Activated CD4-positive, alpha-beta memory T cell treated with anti-CD3 and anti-CD28 coated beads for 36 hours (primary cell): ENCODE measurements at regions of chr17 and their contacts with region 1.

Region 1: DNA sequence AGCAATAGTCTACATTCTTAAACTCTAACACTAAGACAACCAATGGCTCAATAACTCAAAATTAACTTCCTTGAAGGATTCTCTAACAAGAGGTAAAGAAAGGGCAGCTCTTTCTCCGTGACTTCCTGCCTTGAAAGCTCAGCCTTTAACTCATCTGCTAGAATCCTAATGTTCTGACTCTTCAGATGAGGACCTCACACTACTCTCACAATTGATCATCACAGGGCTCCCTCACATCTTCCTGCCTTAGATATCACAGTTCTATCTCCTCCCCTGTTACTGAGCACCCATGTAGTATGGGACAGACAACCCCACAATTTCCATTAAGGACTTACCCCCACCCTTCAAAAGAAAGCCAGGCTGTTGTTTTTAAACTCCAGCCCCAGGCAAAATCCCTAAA is 33.5 kb downstream of the SMURF2 start:
- DNase-seq: peak; percentile 40
- H3K4me3 Mint-ChIP-seq: peak overlapping the region; percentile 56
- H3K27ac Mint-ChIP-seq: peak overlapping the region; percentile 75
- H3K4me1 Mint-ChIP-seq: peaks cover 55% of the 10 kb centered on the region
- H3K27me3 Mint-ChIP-seq: no peaks in the 10 kb centered on the region

Region 2: GRCh38 chr17:64437944-64438525 is 190.6 kb before region 1 on chr17:
- CTCF ChIA-PET with region 1: no interaction called
- POLR2A ChIA-PET with region 1: no interaction called
- intact Hi-C with region 1: no loop called
- DNase-seq: no peak
- H3K4me3 Mint-ChIP-seq: no peak overlapping the region
- H3K27ac Mint-ChIP-seq: no peak overlapping the region
- H3K4me1 Mint-ChIP-seq: peaks cover 19% of the 10 kb centered on the region
- H3K27me3 Mint-ChIP-seq: no peaks in the 10 kb centered on the region

Region 3: DNA sequence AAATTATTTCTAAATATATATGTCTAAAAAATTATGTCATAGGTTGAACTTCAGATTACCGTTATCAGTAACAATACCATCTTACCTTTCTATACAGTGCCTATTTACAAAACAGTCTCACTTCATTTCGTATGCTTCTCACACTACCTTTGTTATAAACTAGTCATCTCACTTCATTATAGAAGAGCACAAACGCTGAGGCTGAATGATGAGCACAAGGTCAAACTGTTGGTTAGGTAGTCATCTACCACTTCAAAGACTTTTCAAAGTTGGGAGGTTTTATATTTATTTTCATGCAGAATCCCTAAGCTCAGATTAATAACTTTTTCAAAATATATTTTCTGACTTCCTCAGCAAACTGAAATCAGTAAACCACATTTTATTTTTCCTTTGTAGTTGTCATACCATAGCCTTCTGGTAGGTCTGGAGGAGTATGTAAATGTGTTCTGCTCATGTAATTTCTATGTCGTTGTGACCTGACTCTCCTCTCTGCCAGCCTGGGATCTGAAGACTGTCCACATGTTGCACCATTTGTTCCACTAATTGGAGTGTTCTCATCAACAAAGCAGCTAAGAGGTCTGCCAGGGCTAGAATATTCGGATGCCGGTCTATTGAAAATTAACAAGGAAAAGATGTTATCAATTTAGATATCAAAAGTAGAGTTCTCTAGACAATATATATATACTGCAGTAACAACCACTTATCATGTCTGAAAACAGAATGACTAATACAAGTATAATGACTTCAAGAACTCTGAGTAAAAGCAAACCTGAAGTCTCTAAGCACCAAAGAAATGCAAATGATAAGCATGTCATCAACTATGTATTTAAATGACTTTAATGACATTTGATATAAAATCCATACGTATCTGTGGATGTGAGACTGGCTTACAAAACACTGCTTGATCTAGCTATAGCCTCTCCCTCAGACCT is 48.0 kb before region 1 on chr17:
- CTCF ChIA-PET with region 1: no interaction called
- POLR2A ChIA-PET with region 1: interaction called, 5 read pairs
- intact Hi-C with region 1: loop called (anchors 2 kb)
- DNase-seq: peak; percentile 19
- H3K4me3 Mint-ChIP-seq: peak overlapping the region; percentile 31
- H3K27ac Mint-ChIP-seq: peak overlapping the region; percentile 86
- H3K4me1 Mint-ChIP-seq: peaks cover 21% of the 10 kb centered on the region
- H3K27me3 Mint-ChIP-seq: no peaks in the 10 kb centered on the region

Region 4: GRCh38 chr17:64608540-64608981 is 20.1 kb before region 1 on chr17:
- CTCF ChIA-PET with region 1: no interaction called
- POLR2A ChIA-PET with region 1: no interaction called
- intact Hi-C with region 1: loop called (anchors 1 kb)
- DNase-seq: no peak
- H3K4me3 Mint-ChIP-seq: peak overlapping the region; percentile 28
- H3K27ac Mint-ChIP-seq: peak overlapping the region; percentile 78
- H3K4me1 Mint-ChIP-seq: peaks cover 34% of the 10 kb centered on the region
- H3K27me3 Mint-ChIP-seq: no peaks in the 10 kb centered on the region

Region 5: GRCh38 chr17:64653325-64653984 is 24.8 kb after region 1 on chr17:
- CTCF ChIA-PET with region 1: interaction called, 18 read pairs
- POLR2A ChIA-PET with region 1: no interaction called
- intact Hi-C with region 1: loop called (anchors 1 kb)
- DNase-seq: no peak
- H3K4me3 Mint-ChIP-seq: no peak overlapping the region
- H3K27ac Mint-ChIP-seq: no peak overlapping the region
- H3K4me1 Mint-ChIP-seq: peaks cover 40% of the 10 kb centered on the region
- H3K27me3 Mint-ChIP-seq: no peaks in the 10 kb centered on the region